AG04449 (cell line): ENCODE measurements at regions of chr14 and their contacts with region 1.

Region 1: DNA sequence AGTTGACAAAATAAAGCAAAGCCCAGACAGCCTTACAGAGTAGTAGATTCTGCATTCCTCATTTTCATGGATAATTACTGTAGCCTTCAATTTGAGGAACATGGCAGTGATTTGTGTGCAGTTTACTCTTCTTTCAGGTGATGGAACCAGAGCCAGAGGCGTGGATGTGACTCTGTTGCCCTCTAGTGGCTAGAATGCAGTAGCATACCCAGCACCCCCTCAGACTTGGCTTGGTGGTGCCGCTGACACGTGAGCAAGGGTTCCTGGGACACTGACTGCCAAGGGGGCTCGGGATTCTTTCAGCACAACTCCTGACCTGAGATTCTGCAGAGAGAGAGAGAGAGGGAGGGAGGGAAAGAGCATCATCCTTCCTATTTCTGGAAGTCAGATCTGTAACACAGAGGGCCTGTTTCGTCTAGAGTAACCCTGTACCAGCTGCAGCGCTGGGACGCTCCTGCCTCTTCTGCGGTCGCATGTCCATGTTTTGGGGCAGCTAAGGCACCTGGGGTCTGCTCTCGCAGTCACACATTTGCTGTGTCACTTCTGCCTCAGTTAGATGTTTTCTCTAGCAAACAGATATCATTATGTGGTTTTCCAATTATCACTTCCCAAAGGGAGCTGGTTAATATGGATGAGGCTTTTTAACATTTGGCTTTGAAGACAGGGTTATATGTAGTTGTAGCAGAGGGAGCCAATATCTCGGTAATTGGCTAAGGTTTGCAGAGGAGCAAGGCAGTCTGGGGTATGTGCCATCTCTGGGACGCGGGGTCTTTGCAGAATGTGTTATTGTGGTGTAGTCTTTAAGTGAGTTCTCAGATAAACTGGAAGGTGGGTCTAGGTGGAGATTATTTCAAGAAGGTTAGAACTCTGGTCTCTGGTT is 428.1 kb downstream of the NRXN3 start:
- DNase-seq: no peak
- H3K4me3 ChIP-seq: no peak overlapping the region
- CTCF ChIP-seq: peak; percentile 94

Region 2: DNA sequence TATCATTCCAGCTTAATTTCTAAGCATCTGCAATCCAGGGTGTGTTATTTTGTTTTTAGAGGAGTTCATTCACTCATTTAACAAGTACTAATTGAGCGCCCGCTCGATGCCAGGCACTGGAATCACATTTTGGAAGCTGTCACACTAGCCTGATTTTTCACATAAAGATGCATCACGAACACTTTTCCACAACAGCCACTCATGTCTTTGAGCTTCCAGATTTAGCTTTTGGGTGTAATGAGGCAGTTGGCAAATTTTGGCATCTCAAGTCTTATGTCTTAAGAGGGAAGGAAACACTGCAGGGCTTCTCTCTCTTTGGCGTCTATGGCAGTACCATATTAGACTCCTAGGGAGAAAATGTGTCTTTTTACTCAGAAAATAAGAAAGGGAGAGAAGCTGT is 414.1 kb before region 1 on chr14:
- CTCF ChIA-PET with region 1: no interaction called
- POLR2A ChIA-PET with region 1: no interaction called
- DNase-seq: no peak
- H3K4me3 ChIP-seq: no peak overlapping the region
- CTCF ChIP-seq: no peak

Region 3: DNA sequence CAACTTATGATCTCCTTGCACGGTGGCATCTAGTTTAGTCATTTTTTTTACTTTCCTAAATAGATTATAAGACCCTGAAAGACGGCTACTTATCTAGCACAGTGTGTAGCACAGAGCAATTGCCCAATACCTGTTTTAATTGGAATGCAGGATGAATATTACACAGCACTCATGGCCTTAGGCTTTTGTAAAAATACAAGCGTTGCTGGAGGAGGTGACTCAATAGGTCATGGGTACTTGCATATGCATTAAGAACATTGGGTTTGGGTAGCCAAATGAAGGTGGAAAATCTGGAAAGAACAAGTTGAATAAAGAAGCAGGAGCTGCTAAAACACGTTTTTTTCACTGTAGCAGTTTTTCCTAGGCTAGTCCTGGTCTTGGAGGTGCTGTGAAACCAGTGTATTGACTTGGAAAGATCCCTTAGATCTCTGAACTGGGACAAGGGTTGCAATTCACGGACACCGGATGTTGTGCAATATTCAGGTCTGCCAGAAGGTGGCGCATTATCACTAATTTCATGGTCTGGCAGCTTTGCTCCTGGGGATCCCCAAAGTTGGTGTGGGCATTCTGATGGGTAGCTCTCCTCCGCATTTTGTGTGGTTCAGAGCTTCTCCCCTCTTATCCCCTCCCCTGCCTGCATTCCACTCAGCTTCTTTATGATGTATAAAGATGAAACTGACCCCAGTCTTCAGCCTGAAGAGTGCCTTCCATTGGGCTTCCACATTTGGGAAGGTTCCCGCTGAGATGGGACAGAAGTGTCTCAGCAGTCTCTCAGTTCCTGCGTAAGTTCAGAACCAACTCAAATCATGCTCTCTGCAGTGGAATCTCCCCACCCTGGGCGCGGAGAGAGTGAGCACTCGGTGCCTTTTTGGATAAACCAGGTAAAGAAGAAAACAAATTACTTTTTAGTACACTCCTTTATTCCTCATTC is 149.9 kb before region 1 on chr14:
- CTCF ChIA-PET with region 1: interaction called, 17 read pairs
- POLR2A ChIA-PET with region 1: no interaction called
- DNase-seq: no peak
- H3K4me3 ChIP-seq: no peak overlapping the region
- CTCF ChIP-seq: peak; percentile 41

Region 4: GRCh38 chr14:78581229-78581628 is 17.1 kb before region 1 on chr14:
- CTCF ChIA-PET with region 1: interaction called, 63 read pairs
- POLR2A ChIA-PET with region 1: no interaction called
- DNase-seq: no peak
- H3K4me3 ChIP-seq: no peak overlapping the region
- CTCF ChIP-seq: no peak

Region 5: GRCh38 chr14:78612666-78613065 is 14.4 kb after region 1 on chr14:
- CTCF ChIA-PET with region 1: interaction called, 35 read pairs
- POLR2A ChIA-PET with region 1: no interaction called
- DNase-seq: no peak
- H3K4me3 ChIP-seq: no peak overlapping the region
- CTCF ChIP-seq: no peak

Region 6: DNA sequence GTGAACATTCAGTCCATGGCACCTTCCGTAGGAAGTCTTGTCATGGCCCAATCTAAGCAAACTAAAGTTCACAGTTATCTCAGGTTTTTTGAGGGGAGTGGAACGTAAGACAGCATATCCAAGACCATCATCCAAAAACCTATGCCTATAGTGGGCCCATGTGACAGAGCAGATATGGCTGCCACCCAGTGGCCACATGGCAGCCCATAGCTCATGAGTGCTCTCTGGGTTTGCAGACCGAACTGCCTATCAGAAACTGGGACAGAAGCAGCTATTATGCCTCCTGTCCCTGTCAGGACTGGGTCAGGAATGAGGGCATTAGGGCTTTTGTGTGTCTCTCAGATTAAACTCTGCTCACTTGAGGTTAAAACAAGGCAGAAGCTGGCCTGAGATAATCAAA is 75.6 kb after region 1 on chr14:
- CTCF ChIA-PET with region 1: no interaction called
- POLR2A ChIA-PET with region 1: no interaction called
- DNase-seq: no peak
- H3K4me3 ChIP-seq: no peak overlapping the region
- CTCF ChIP-seq: no peak

Region 7: GRCh38 chr14:78697341-78697740 is 99.1 kb after region 1 on chr14:
- CTCF ChIA-PET with region 1: interaction called, 35 read pairs
- POLR2A ChIA-PET with region 1: no interaction called
- DNase-seq: peak; percentile 14
- H3K4me3 ChIP-seq: no peak overlapping the region
- CTCF ChIP-seq: peak; percentile 58